BJ (cell line): ENCODE measurements at regions of chr11 and their contacts with region 1.

Region 1: GRCh38 chr11:67391304-67392132 is at the start of gene RAD9A:
- DNase-seq: no peak
- H3K4me3 ChIP-seq: peak within 1 kb of the TSS; percentile 92
- H3K27me3 ChIP-seq: no peaks in the 10 kb centered on the region; the same call in 1 of the 2 replicates
- CTCF ChIP-seq: no peak
- polyA plus RNA-seq, gene RAD9A: 5.9 and 10.7 TPM in 2 replicates

Region 2: DNA sequence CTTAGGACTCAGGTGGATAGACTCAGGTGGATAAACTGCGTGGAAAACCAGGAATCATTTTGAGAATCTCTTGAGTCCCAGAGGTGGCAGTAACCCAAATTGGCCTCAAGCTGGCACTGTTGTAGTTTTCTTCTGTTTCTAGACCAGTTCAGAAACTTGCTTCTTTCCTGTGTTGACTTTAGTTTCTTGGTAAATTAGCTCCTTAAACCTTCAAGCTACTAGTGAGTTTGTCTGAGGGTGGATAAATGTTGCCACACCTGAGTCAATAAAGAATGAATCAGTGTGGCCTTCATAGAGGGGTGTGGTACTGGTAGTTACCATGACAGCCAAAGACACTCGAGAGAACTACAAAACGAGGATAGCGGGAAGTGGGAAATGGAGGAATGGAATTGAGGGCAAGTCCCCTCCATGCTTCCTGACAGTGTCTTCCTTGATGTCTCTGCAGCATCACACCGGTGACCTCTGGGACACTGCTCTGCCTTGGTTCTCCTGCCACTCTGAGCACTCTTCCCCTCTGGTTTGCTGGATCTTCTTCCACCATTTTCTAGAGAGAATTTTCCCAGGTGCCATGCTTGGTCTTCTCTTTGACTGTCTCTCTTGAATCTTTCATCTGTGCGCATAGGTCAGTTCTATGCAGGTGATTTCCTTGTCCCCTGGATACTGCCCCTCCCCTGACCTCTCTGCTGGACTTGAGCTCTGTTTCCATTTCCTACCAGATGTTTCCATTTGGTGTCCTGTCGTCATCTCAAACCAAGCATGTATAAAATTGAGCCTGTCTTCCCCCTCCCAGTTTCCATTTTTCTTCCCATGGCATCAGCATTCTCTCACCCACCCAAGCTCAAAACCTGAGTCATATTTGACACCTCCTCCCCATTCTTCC is 45.4 kb before region 1 on chr11:
- CTCF ChIA-PET with region 1: interaction called, 892 read pairs
- POLR2A ChIA-PET with region 1: interaction called, 6 read pairs
- DNase-seq: no peak
- H3K4me3 ChIP-seq: no peak overlapping the region
- H3K27me3 ChIP-seq: no peaks in the 10 kb centered on the region
- CTCF ChIP-seq: peak; percentile 81